ENCODE measurements at regions of chr3 and their contacts with region 1.

Region 1: DNA sequence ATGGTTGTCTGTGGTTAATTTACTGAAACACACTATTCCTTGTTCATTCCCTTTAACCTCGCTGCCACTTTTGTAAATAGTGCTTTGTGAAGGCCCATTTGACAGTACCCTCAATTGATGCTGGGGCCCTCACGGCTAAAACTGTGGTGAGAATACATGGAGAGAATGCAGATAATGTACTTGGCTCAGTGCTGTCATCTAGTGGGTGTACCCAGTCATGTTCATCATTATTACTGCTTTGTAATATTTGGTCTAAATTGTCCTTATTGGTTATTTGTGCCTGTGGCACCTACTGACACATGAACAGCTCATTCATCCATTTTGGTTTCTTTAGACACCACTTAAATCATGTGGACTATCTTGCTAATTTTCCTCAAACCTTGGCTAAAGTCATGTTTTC is 543.6 kb downstream of the EDEM1 start:
- DNase-seq: no peak
- H3K4me3 Mint-ChIP-seq: no peak overlapping the region
- H3K27ac Mint-ChIP-seq: no peak overlapping the region
- H3K4me1 Mint-ChIP-seq: no peaks in the 10 kb centered on the region
- H3K27me3 Mint-ChIP-seq: no peaks in the 10 kb centered on the region

Region 2: DNA sequence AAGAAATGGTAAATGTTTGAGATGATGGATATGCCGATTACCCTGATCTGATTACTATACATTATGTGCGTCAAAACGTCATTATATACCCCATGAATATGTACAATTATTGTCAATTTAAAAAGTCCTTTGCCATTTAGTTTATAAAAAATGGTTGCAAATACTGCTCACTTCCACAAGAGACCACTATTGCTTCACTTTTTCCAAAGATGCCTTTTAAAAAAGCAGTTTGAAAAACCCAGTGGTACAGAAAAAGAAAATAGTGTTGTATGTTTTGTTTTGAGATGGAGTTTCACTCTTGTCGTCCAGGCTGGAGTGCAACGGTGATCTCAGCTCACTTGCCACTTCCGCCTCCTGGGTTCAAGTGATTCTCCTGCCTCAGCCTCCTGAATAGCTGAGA is 504.3 kb before region 1 on chr3:
- CTCF ChIA-PET with region 1: no interaction called
- POLR2A ChIA-PET with region 1: no interaction called
- intact Hi-C with region 1: loop called (anchors 10 kb)
- DNase-seq: no peak
- H3K4me3 Mint-ChIP-seq: no peak overlapping the region
- H3K27ac Mint-ChIP-seq: no peak overlapping the region
- H3K4me1 Mint-ChIP-seq: peaks cover 1% of the 10 kb centered on the region
- H3K27me3 Mint-ChIP-seq: no peaks in the 10 kb centered on the region

Measured in activated CD4-positive, alpha-beta memory T cell treated with anti-CD3 and anti-CD28 coated beads for 36 hours (primary cell).